Activated T-helper 2 cell treated with anti-CD3 and anti-CD28 coated beads, Interferon-gamma antibody, Interleukin-2, Interleukin-4, amounts not matched to agents 10 μg/mL and 5 μg/mL and 100 μg/mL, durations not matched to agents 14 hours and 24 hours and 36 hours (primary cell): ENCODE measurements at regions of chr1 and their contacts with region 1.

Region 1: DNA sequence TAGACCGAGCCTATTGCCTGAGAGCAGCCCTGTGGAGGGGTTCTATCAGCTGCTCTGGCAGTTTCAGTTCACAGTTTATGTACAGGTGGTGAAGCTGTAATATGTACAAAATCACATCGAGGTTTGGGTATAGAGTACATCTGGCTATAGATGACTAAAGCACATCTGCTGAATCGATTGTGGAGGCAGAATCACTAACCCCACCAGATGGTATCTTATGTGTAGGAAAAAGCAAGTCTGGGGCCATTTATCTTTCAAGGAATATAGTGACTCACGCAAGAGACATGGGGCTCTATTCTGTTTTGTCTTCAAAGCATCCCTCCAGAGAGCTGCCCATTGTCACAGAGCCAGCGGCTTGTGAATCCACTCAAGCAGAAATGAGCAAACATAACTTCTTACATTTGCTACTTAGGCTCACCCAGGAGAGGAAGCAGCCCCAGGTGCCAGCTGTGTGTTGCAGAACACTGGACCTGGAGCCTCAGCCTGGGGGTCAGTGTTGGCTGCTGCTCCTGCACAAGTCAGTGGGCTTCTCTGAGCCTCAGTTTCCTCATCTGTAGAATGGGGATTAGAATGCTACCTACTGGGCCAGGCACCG is 21.3 kb downstream of the MIIP start:
- DNase-seq: no peak
- H3K4me3 Mint-ChIP-seq: no peak overlapping the region
- H3K27ac Mint-ChIP-seq: peak overlapping the region; percentile 49
- H3K4me1 Mint-ChIP-seq: peaks cover 49% of the 10 kb centered on the region
- H3K27me3 Mint-ChIP-seq: no peaks in the 10 kb centered on the region

Region 2: DNA sequence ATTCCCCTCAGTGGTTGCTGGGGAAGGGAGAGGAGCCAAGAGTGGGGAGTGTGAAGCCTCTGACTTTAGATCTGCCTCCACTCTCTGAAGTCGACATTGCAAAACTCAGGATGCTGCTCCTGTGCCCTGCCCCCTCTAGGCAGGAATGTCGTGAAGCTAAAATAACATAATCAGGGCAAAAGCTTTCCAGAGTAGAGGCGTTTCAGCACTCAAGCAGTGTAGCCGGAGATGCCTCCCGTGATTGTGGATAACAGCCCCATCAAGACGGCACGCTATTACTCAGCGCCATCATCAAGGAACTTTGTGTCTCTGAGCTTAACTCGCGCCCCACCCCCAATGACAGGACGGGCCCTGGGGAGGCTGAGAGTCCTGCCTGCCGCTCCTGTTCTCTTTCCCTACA is 446.3 kb before region 1 on chr1:
- intact Hi-C with region 1: no loop called
- DNase-seq: no peak
- H3K4me3 Mint-ChIP-seq: no peak overlapping the region
- H3K27ac Mint-ChIP-seq: no peak overlapping the region
- H3K4me1 Mint-ChIP-seq: no peaks in the 10 kb centered on the region
- H3K27me3 Mint-ChIP-seq: peaks cover 1% of the 10 kb centered on the region

Region 3: GRCh38 chr1:12001249-12001917 is 39.2 kb before region 1 on chr1:
- intact Hi-C with region 1: loop called (anchors 5 kb)
- DNase-seq: peak; percentile 50
- H3K4me3 Mint-ChIP-seq: no peak overlapping the region
- H3K27ac Mint-ChIP-seq: peak overlapping the region; percentile 38
- H3K4me1 Mint-ChIP-seq: peaks cover 5% of the 10 kb centered on the region
- H3K27me3 Mint-ChIP-seq: no peaks in the 10 kb centered on the region

Region 4: DNA sequence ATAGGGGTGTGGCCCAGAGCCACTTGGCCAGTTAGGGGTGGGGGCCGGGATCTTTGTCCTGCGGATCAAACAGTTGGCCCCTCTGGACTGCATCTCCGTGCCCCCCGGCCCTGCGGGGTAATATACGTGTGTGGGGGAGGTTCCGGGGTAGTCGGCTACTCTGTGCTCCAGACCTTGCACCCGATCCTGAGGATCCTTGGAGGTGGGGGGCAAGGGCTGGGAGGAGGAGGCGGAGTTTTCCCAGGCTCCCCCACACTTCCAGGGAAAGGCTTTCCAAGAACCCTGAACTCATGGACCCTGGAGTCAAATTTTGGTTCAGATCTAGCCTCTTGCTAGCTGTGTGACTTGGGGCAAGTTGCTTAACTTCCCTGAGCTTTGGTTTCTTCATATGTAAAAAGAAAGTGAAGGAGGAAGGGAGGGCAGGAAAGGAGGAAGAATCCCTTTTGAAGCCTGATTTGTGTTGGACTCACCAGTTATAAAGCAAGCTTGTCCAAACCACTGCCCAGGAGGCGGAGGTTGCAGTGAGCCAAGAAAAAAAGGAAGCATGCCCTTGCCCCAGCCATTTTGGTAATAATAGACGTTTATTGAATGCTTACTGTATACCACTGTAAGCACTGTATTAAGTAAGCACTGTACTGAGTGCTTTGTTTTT is 20.6 kb before region 1 on chr1:
- intact Hi-C with region 1: loop called (anchors 1 kb)
- DNase-seq: no peak
- H3K4me3 Mint-ChIP-seq: peak overlapping the region; percentile 87
- H3K27ac Mint-ChIP-seq: peak overlapping the region; percentile 72
- H3K4me1 Mint-ChIP-seq: peaks cover 6% of the 10 kb centered on the region
- H3K27me3 Mint-ChIP-seq: no peaks in the 10 kb centered on the region

Region 5: GRCh38 chr1:12087797-12088314 is 47.3 kb after region 1 on chr1:
- intact Hi-C with region 1: loop called (anchors 2 kb)
- DNase-seq: peak; percentile 62
- H3K4me3 Mint-ChIP-seq: peak overlapping the region; percentile 70
- H3K27ac Mint-ChIP-seq: peak overlapping the region; percentile 97
- H3K4me1 Mint-ChIP-seq: peaks cover 58% of the 10 kb centered on the region
- H3K27me3 Mint-ChIP-seq: no peaks in the 10 kb centered on the region